MCF 10A (cell line): ENCODE measurements at regions of chr11 and their contacts with region 1.

Region 1: DNA sequence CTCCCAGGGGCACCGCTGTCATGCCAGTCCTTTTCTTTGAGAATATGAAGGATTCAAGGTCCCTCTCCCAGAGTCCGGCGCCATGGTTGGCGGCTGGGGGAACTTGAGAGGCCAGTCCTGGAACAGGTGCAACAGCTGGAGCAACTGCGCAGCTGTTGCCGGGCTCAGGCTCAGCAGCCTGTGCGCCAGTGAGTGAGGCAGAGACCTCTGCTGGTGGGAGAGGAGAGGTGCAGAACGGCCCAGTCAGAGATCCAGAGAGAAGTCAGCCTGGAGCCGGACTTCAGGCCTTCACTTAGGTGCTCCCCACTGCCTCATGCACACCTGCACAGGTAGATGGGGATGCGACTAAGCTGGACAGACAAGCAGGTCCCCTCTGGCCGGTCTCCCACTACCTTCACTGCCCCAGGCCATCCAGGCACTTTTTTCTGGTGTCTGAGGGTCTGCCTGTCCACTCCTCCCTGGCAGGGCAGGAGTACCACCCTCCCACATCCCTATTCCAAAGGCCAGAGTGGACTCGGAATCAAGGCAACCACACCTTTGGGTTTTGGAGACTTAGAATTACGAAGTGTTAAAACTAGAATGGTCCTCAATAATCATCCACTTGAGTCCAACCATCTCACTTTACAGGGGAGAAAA is 4.6 kb downstream of the CHRDL2 start:
- DNase-seq: peak; percentile 73
- H3K4me3 Mint-ChIP-seq: no peak overlapping the region
- H3K27ac Mint-ChIP-seq: no peak overlapping the region
- H3K4me1 Mint-ChIP-seq: peaks cover 6% of the 10 kb centered on the region
- H3K27me3 Mint-ChIP-seq: peaks cover 46% of the 10 kb centered on the region
- CTCF ChIP-seq: peak; percentile 85

Region 2: DNA sequence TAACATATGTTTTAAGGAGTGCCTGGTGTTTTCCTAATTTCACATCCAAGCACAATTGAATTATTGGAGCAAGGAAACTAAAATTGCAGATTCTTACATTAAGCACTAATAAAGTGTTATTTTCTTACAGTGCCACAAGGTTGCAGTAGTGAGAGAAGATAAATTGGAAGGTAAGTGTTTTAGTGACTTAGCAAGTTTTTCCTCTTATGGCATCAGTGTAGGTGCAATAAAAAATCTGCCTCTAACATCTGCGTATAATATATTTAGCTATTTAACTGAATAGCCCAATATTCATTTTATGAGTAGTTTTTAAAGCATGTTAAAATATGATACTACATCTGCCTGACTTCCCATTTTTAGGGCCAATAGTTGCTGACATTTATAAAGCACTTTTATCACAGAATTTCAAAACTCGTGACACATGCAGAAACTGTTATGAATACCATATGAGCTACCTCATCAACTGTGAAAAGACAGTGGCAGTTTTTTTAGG is 115.2 kb before region 1 on chr11:
- CTCF ChIA-PET with region 1: interaction called, 20 read pairs
- POLR2A ChIA-PET with region 1: no interaction called
- intact Hi-C with region 1: loop called (anchors 1 kb)
- DNase-seq: peak; percentile 55
- H3K4me3 Mint-ChIP-seq: no peak overlapping the region
- H3K27ac Mint-ChIP-seq: no peak overlapping the region
- H3K4me1 Mint-ChIP-seq: no peaks in the 10 kb centered on the region
- H3K27me3 Mint-ChIP-seq: no peaks in the 10 kb centered on the region
- CTCF ChIP-seq: peak; percentile 38

Region 3: GRCh38 chr11:74647404-74647803 is 79.3 kb before region 1 on chr11:
- CTCF ChIA-PET with region 1: interaction called, 15 read pairs
- POLR2A ChIA-PET with region 1: no interaction called
- intact Hi-C with region 1: no loop called
- DNase-seq: no peak
- H3K4me3 Mint-ChIP-seq: no peak overlapping the region
- H3K27ac Mint-ChIP-seq: no peak overlapping the region
- H3K4me1 Mint-ChIP-seq: no peaks in the 10 kb centered on the region
- H3K27me3 Mint-ChIP-seq: no peaks in the 10 kb centered on the region
- CTCF ChIP-seq: no peak

Region 4: DNA sequence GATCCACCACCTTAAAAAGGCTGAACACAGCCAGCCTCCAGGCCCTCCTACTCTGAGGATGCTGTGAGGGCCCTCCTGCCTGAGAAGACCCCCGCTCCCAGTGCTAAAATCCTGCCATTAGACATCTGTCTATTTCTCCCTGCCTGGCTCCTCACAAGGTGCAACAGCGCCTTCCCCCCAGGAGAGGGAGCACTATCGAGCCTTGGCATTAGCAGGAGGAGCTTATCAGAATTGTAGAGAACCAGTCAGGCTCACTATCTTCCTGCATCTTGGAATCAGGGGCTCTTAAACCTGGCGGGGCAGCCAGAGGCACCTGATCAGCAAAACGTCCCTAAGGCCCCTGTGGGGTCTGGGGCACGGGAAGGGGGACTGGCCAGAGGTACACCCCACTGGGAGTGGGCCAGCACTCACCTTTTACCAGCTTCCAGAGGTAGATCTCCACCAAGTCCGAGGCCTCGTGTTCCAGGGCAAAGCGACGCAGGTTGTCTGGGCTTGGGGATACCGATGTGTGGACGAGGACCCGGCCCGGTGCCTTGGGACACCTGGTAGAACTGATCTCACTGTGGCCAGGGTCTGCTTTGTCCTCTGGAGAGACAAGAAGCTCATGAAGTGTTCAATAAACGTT is 24.2 kb before region 1 on chr11:
- CTCF ChIA-PET with region 1: interaction called, 69 read pairs
- POLR2A ChIA-PET with region 1: interaction called, 6 read pairs
- intact Hi-C with region 1: no loop called
- DNase-seq: peak; percentile 78
- H3K4me3 Mint-ChIP-seq: no peak overlapping the region
- H3K27ac Mint-ChIP-seq: no peak overlapping the region
- H3K4me1 Mint-ChIP-seq: peaks cover 3% of the 10 kb centered on the region
- H3K27me3 Mint-ChIP-seq: no peaks in the 10 kb centered on the region
- CTCF ChIP-seq: peak; percentile 86

Region 5: DNA sequence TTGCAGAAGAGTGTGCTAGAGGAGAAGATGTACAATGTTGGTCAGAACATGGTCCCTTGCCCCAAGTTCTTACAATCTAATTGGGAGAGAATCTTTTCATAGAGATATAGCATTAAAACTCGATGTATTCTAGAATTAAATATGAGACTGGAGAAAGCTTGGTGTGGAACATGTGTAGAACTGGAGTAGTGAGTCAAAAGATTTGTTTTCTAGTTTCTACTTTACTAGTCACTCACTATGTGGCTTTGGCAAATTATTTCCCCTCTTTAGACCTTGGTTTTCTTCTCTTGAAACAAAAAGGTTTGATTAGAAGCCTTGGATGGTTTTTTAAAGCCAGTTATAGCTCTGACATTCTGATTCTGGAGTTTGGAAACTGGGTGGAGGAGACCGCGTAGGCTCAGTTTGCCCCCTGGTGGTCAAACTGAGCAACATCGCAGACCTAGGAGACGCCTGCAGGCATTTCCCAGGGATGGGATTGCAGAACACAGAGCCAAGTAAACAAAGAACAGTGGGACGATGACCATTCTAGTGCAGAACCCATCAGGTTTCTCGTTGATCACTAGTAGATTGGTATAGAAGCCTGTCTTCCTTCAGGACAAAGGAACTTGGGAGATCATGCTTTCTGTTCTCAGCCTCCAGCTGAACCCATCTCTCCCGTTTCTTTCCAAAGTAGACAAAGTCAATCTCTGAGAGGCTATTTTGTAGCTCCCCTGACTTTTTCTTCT is 13.0 kb after region 1 on chr11:
- CTCF ChIA-PET with region 1: interaction called, 13 read pairs
- POLR2A ChIA-PET with region 1: interaction called, 3 read pairs
- intact Hi-C with region 1: no loop called
- DNase-seq: peak; percentile 79
- H3K4me3 Mint-ChIP-seq: no peak overlapping the region
- H3K27ac Mint-ChIP-seq: no peak overlapping the region
- H3K4me1 Mint-ChIP-seq: no peaks in the 10 kb centered on the region
- H3K27me3 Mint-ChIP-seq: no peaks in the 10 kb centered on the region
- CTCF ChIP-seq: peak; percentile 81

Region 6: DNA sequence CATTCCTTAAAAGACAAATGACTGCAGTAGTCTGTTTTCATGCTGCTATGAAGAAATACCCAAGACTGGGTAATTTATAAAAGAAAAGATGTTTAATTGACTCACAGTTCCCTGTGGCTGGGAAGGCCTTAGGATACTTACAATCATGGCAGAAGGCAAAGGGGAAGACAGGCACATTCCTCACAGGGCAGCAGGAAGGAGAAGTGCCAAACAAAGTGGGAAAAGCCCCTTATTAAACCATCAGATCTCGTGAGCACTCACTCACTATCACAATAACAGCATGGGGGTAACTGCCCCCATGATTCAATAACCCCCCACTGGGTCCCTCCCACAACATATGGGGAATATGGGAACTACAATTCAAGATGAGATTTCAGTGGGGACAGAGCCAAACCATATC is 386.4 kb after region 1 on chr11:
- CTCF ChIA-PET with region 1: no interaction called
- POLR2A ChIA-PET with region 1: no interaction called
- intact Hi-C with region 1: no loop called
- DNase-seq: no peak
- H3K4me3 Mint-ChIP-seq: no peak overlapping the region
- H3K27ac Mint-ChIP-seq: no peak overlapping the region
- H3K4me1 Mint-ChIP-seq: no peaks in the 10 kb centered on the region
- H3K27me3 Mint-ChIP-seq: peaks cover 11% of the 10 kb centered on the region
- CTCF ChIP-seq: no peak